Activated CD4-positive, alpha-beta memory T cell treated with anti-CD3 and anti-CD28 coated beads for 36 hours (primary cell): ENCODE measurements at regions of chr15 and their contacts with region 1.

Region 1: GRCh38 chr15:58469432-58470353 is 37.9 kb downstream of the LIPC start:
- DNase-seq: no peak
- H3K4me3 Mint-ChIP-seq: no peak overlapping the region
- H3K27ac Mint-ChIP-seq: no peak overlapping the region
- H3K4me1 Mint-ChIP-seq: peaks cover 41% of the 10 kb centered on the region
- H3K27me3 Mint-ChIP-seq: no peaks in the 10 kb centered on the region

Region 2: DNA sequence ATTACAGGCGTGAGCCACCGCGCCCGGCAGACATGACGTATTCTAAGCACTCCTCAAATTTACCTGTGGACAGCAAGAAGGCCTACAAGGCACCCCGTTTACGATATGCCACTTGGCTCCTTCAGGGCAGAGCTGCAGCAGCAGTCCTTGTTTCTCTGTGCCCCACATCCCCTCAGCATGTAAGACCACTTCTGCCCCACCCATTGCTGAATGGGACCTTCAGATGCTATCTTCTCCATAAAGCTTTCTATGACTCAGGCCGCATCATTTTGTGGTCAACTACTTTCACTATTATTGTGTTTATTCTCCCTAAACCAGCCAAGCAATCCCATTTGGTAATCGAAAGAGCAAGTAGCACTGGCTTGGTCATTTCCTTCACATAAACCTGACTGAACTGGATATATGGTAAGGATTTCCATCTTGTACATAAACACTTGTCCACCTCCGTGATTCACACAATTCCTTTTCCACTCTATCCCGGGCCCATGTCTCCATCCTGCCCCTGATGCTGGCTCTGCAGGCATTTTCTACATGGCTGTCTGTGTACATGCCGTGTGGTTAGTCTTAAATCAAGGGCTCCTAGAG is 12.2 kb before region 1 on chr15:
- CTCF ChIA-PET with region 1: interaction called, 9 read pairs
- POLR2A ChIA-PET with region 1: interaction called, 6 read pairs
- intact Hi-C with region 1: loop called (anchors 1 kb)
- DNase-seq: peak; percentile 53
- H3K4me3 Mint-ChIP-seq: no peak overlapping the region
- H3K27ac Mint-ChIP-seq: peak overlapping the region; percentile 66
- H3K4me1 Mint-ChIP-seq: peaks cover 47% of the 10 kb centered on the region
- H3K27me3 Mint-ChIP-seq: no peaks in the 10 kb centered on the region

Region 3: GRCh38 chr15:58517682-58518525 is 48.2 kb after region 1 on chr15:
- CTCF ChIA-PET with region 1: no interaction called
- POLR2A ChIA-PET with region 1: no interaction called
- intact Hi-C with region 1: loop called (anchors 5 kb)
- DNase-seq: no peak
- H3K4me3 Mint-ChIP-seq: no peak overlapping the region
- H3K27ac Mint-ChIP-seq: no peak overlapping the region
- H3K4me1 Mint-ChIP-seq: peaks cover 24% of the 10 kb centered on the region
- H3K27me3 Mint-ChIP-seq: no peaks in the 10 kb centered on the region

Region 4: DNA sequence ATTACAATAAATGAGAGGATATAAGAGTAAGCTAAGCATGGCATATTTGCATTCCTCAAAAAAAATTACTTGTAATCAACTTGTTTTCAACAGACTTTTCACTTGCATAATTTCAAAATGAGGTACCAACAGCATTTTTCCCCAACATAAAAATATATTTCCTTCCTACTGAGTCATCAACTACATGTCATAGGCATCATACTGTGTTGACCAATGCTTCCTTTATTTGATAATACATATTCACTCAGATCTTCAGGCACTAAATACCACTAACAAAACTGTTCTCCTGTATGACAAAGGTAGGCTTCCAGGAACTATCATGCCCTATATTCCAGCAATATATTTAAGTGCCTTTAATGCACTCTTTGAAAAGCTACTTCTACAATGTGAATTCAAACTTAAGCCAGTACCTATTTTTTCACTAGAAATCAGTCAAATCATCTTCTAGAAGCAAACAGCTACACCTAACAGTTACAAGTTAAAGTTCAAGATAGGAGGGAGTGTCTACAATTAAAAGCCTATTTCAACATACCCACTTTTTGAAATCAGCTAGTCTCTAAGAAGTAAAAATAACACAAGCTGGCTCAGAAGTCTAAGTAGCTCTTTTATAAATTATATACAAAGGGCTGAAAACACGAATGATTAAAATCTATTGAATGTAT is 268.5 kb after region 1 on chr15:
- CTCF ChIA-PET with region 1: no interaction called
- POLR2A ChIA-PET with region 1: no interaction called
- intact Hi-C with region 1: no loop called
- DNase-seq: no peak
- H3K4me3 Mint-ChIP-seq: no peak overlapping the region
- H3K27ac Mint-ChIP-seq: peak overlapping the region; percentile 67
- H3K4me1 Mint-ChIP-seq: peaks cover 67% of the 10 kb centered on the region
- H3K27me3 Mint-ChIP-seq: no peaks in the 10 kb centered on the region